Activated CD4-positive, alpha-beta T cell treated with anti-CD3 and anti-CD28 coated beads for 36 hours (primary cell): ENCODE measurements at regions of chr1 and their contacts with region 1.

Region 1: DNA sequence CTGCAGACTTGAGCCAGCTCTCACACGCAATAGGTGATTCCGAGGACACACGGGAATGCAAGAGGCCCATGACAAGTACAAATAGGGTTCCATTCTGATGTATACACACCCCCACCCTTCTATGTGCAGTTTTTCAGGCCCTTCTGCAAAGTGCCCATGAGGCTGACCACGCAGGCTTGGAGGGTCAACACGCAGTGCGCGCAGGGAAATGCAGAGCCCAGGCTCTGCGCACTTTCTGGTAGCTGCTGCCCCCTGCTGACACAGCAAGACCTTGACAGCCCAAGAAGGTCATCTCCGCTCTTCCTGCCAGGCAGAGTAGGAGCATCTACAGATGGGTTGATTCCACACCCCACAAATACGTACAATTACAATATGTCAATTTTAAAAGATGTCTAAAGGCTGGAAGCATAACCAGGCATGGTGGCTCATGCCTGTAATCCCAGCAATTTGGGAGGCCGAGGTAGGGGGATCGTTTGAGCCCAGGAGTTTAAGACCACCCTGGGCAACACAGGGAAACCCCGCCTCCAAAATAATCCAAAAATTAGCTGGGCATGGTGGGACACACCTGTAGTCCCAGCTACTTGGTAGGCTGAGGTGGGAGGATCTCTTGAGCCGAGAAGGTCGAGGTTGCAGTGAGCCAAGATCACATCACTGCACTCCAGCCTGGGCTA is 18.5 kb downstream of the SH3BP5L start:
- DNase-seq: peak; percentile 81
- ATAC-seq: peak; percentile 93
- H3K4me3 Mint-ChIP-seq: no peak overlapping the region
- H3K27ac Mint-ChIP-seq: no peak overlapping the region
- H3K4me1 Mint-ChIP-seq: no peaks in the 10 kb centered on the region
- H3K27me3 Mint-ChIP-seq: peaks cover 4% of the 10 kb centered on the region

Region 2: GRCh38 chr1:248404024-248404423 is 403.2 kb before region 1 on chr1:
- CTCF ChIA-PET with region 1: interaction called, 4 read pairs
- POLR2A ChIA-PET with region 1: no interaction called
- intact Hi-C with region 1: loop called (anchors 2 to 5 kb)
- DNase-seq: no peak
- ATAC-seq: no peak
- H3K4me3 Mint-ChIP-seq: no peak overlapping the region
- H3K27ac Mint-ChIP-seq: no peak overlapping the region
- H3K4me1 Mint-ChIP-seq: no peaks in the 10 kb centered on the region
- H3K27me3 Mint-ChIP-seq: no peaks in the 10 kb centered on the region

Region 3: DNA sequence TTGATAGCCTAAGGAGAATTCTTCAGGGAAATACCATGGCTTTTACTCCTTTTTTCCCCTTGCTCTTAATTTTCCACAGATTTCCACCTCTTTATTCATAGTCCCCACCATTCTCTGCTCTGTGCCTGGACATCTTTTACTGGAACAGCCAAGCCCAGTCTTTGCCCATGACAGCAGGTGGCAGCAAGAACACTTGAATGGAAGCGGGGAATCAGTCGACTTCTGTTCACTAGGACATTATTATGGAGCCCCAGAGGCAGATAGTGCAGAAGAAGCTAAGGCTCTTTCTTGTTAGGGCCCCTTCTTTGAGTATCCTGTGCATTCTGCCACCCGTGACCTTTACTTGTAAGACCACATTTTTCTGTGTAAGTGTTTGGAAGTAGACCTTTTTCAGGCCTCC is 110.9 kb before region 1 on chr1:
- CTCF ChIA-PET with region 1: no interaction called
- POLR2A ChIA-PET with region 1: no interaction called
- intact Hi-C with region 1: loop called (anchors 2 to 5 kb)
- DNase-seq: peak; percentile 24
- ATAC-seq: no peak
- H3K4me3 Mint-ChIP-seq: no peak overlapping the region
- H3K27ac Mint-ChIP-seq: no peak overlapping the region
- H3K4me1 Mint-ChIP-seq: no peaks in the 10 kb centered on the region
- H3K27me3 Mint-ChIP-seq: peaks cover 10% of the 10 kb centered on the region